Calu3 (cell line): ENCODE measurements at regions of chr2 and their contacts with region 1.

Region 1: GRCh38 chr2:162118559-162119031 is 33.5 kb downstream of the GCG start:
- DNase-seq: no peak
- H3K4me3 Mint-ChIP-seq: no peak overlapping the region
- H3K27ac Mint-ChIP-seq: no peak overlapping the region
- H3K4me1 Mint-ChIP-seq: no peaks in the 10 kb centered on the region
- H3K27me3 Mint-ChIP-seq: no peaks in the 10 kb centered on the region
- CTCF ChIP-seq: no peak

Region 2: DNA sequence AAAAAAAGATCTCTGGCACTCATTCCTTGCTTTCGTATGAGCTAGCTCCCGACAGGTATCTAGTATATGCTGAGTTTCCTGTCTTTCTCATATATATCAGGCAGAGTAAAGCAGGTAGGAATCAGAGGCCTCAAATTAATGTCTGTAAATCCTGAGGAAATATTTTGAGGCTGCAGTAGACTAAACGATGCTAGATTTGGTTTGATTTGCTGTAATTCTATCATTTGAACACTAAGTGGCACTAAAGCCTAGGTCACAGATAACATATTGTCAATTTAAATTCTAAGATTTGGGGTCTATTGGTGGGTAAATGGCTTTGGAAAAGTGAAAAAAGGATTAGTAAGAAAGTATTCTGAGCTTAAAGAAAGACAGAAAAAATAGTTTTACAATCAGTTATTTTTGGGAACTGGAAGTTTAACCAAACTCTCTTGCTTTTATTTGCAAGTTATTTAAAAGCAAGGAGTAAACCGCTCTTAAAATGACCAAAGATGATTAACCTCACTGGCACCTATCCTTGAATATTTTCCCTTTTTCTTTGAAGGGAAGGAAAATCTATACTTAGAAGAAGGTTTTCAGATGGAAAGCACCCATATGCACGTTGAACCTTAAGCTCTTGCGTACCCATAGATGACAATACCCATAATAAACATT is 532.0 kb before region 1 on chr2:
- CTCF ChIA-PET with region 1: no interaction called
- intact Hi-C with region 1: loop called (anchors 2 kb)
- DNase-seq: no peak
- H3K4me3 Mint-ChIP-seq: no peak overlapping the region
- H3K27ac Mint-ChIP-seq: no peak overlapping the region
- H3K4me1 Mint-ChIP-seq: no peaks in the 10 kb centered on the region
- H3K27me3 Mint-ChIP-seq: no peaks in the 10 kb centered on the region
- CTCF ChIP-seq: peak; percentile 34

Region 3: GRCh38 chr2:161938339-161938738 is 180.3 kb before region 1 on chr2:
- CTCF ChIA-PET with region 1: no interaction called
- intact Hi-C with region 1: no loop called
- DNase-seq: no peak
- H3K4me3 Mint-ChIP-seq: no peak overlapping the region
- H3K27ac Mint-ChIP-seq: no peak overlapping the region
- H3K4me1 Mint-ChIP-seq: peaks cover 11% of the 10 kb centered on the region
- H3K27me3 Mint-ChIP-seq: no peaks in the 10 kb centered on the region
- CTCF ChIP-seq: no peak

Region 4: GRCh38 chr2:162379719-162380580 is 261.4 kb after region 1 on chr2:
- CTCF ChIA-PET with region 1: no interaction called
- intact Hi-C with region 1: no loop called
- DNase-seq: no peak
- H3K4me3 Mint-ChIP-seq: no peak overlapping the region
- H3K27ac Mint-ChIP-seq: no peak overlapping the region
- H3K4me1 Mint-ChIP-seq: no peaks in the 10 kb centered on the region
- H3K27me3 Mint-ChIP-seq: no peaks in the 10 kb centered on the region
- CTCF ChIP-seq: no peak

Region 5: DNA sequence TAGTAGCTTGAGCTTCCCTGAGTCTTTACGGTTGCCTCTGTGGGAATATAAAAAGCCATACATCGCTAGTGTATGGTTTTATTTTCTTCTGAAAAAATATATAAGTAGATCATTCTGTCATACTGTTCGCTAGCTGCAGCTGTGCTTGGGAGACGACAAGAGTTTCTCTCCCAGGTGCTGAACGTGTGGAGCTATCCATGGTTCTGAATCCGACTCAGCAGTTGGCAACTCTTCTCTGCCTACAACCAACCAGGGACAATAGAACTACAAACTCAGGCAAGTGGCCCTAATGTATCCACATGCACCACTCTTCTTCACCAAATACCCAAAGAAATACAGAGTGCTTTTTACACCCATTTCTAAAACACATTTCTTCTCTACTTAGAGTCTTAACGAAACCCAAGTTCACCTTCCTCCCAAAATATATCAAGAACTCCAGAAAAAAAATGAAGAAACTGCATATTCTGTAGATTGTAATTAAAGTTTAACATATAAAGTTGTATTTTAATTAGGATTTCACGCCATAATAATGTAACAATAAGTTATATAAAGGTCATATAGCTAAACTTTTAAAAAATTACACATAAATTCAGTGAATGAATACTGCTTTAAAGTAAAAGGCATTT is 722.1 kb after region 1 on chr2:
- CTCF ChIA-PET with region 1: no interaction called
- intact Hi-C with region 1: no loop called
- DNase-seq: peak; percentile 77
- H3K4me3 Mint-ChIP-seq: no peak overlapping the region
- H3K27ac Mint-ChIP-seq: no peak overlapping the region
- H3K4me1 Mint-ChIP-seq: peaks cover 16% of the 10 kb centered on the region
- H3K27me3 Mint-ChIP-seq: no peaks in the 10 kb centered on the region
- CTCF ChIP-seq: no peak